B cell (primary cell): ENCODE measurements at regions of chr18 and their contacts with region 1.

Region 1: GRCh38 chr18:58716060-58716756 is 44.9 kb downstream of the MALT1 start:
- DNase-seq: peak; percentile 57
- ATAC-seq: peak; percentile 73
- H3K4me3 ChIP-seq: peak overlapping the region in 1 of 5 experiments; percentile 5
- H3K4me3 Mint-ChIP-seq: peak overlapping the region; percentile 62
- H3K27ac ChIP-seq: peak overlapping the region in 1 of 2 donors; percentile 82
- H3K27ac Mint-ChIP-seq: peak overlapping the region; percentile 70
- H3K4me1 ChIP-seq: peaks cover 23 to 34% of the 10 kb centered on the region in 2 donors
- H3K4me1 Mint-ChIP-seq: peaks cover 40% of the 10 kb centered on the region
- H3K27me3 ChIP-seq: no peaks in the 10 kb centered on the region
- H3K27me3 Mint-ChIP-seq: no peaks in the 10 kb centered on the region
- CTCF ChIP-seq: no peak

Region 2: DNA sequence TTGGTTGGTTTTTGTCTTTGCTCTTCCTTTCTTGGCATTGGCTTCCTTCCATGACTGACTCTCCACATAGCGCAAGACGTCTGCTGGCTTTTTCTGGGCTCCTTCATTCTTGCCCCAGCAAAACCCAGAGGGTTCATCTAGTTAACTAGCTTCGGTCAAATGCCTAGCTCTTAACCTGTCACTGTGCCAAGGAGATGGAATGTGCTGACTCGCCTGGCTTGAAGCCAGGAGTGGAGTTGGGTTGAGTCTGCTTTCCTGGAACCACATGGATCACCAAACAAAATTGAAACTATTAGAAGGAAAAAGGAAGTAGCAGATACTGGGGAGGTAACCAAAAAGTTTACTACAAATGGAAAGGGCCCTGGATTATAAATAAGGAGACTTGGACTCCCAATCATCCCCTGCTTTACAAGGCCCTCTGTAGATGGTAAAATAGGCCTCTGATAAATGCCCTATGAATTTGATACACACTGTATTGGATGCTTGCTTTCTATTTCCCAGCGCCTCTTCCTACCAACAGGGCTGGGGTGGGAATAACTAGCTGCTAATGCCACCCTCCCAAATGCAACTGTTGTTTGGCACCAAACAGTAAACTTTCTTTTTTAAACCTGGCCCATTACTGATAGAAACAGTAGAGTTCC is 33.7 kb before region 1 on chr18:
- CTCF ChIA-PET with region 1: no interaction called
- POLR2A ChIA-PET with region 1: no interaction called
- intact Hi-C with region 1: loop called (anchors 2 kb)
- DNase-seq: no peak
- ATAC-seq: no peak
- H3K4me3 ChIP-seq: no peak overlapping the region
- H3K4me3 Mint-ChIP-seq: no peak overlapping the region
- H3K27ac ChIP-seq: peak overlapping the region in 1 of 2 donors; percentile 37
- H3K27ac Mint-ChIP-seq: no peak overlapping the region
- H3K4me1 ChIP-seq: peaks cover 4 to 13% of the 10 kb centered on the region in 2 donors
- H3K4me1 Mint-ChIP-seq: peaks cover 41% of the 10 kb centered on the region
- H3K27me3 ChIP-seq: no peaks in the 10 kb centered on the region
- H3K27me3 Mint-ChIP-seq: no peaks in the 10 kb centered on the region
- CTCF ChIP-seq: no peak

Region 3: DNA sequence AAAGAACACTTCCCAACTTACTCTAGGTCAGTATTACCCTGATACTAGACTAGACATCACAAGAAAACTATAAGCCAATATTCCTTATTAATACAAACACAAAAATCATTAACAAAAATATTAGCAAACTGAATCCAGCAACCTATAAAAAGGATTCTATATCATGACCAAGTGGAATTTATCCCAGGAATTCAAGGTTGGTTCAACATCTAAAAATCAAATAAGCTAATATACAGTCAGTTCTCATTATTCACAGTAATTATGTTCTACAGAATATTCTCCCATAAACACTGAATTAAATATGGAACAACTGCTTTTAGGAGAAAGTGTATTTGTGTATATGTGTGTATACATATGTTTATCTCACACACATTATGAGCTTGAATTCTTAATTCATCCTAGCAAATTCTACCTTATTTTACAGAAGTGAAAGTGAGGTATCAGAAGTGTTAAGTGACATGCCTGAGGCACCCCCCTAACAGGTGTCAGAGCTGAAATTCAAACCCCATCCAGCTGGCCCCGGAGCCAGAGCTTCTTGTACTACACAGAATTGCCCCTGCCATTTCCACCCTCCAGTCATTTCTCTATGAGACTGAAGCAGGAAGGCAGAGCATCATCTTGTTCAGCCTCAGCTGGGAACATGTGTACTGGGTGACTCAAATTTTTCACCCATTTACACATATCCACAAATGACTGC is 32.8 kb after region 1 on chr18:
- CTCF ChIA-PET with region 1: no interaction called
- POLR2A ChIA-PET with region 1: no interaction called
- intact Hi-C with region 1: loop called (anchors 5 kb)
- DNase-seq: no peak
- ATAC-seq: no peak
- H3K4me3 ChIP-seq: no peak overlapping the region
- H3K4me3 Mint-ChIP-seq: no peak overlapping the region
- H3K27ac ChIP-seq: no peak overlapping the region
- H3K27ac Mint-ChIP-seq: no peak overlapping the region
- H3K4me1 ChIP-seq: no peaks in the 10 kb centered on the region
- H3K4me1 Mint-ChIP-seq: peaks cover 14% of the 10 kb centered on the region
- H3K27me3 ChIP-seq: no peaks in the 10 kb centered on the region
- H3K27me3 Mint-ChIP-seq: no peaks in the 10 kb centered on the region
- CTCF ChIP-seq: no peak

Region 4: GRCh38 chr18:58787536-58788149 is 71.4 kb after region 1 on chr18:
- CTCF ChIA-PET with region 1: no interaction called
- POLR2A ChIA-PET with region 1: no interaction called
- intact Hi-C with region 1: no loop called
- DNase-seq: no peak
- ATAC-seq: no peak
- H3K4me3 ChIP-seq: no peak overlapping the region
- H3K4me3 Mint-ChIP-seq: no peak overlapping the region
- H3K27ac ChIP-seq: no peak overlapping the region
- H3K27ac Mint-ChIP-seq: no peak overlapping the region
- H3K4me1 ChIP-seq: peaks cover 2 to 13% of the 10 kb centered on the region in 2 donors
- H3K4me1 Mint-ChIP-seq: peaks cover 8% of the 10 kb centered on the region
- H3K27me3 ChIP-seq: no peaks in the 10 kb centered on the region
- H3K27me3 Mint-ChIP-seq: no peaks in the 10 kb centered on the region
- CTCF ChIP-seq: no peak

Region 5: GRCh38 chr18:58847383-58848071 is 131.3 kb after region 1 on chr18:
- CTCF ChIA-PET with region 1: no interaction called
- POLR2A ChIA-PET with region 1: no interaction called
- intact Hi-C with region 1: no loop called
- DNase-seq: peak; percentile 47
- ATAC-seq: peak; percentile 45
- H3K4me3 ChIP-seq: peak overlapping the region in 4 of 5 experiments; percentile 28 to 59 (median 53)
- H3K4me3 Mint-ChIP-seq: peak overlapping the region; percentile 87
- H3K27ac ChIP-seq: no peak overlapping the region
- H3K27ac Mint-ChIP-seq: peak overlapping the region; percentile 37
- H3K4me1 ChIP-seq: peaks cover 13 to 18% of the 10 kb centered on the region in 2 donors
- H3K4me1 Mint-ChIP-seq: peaks cover 21% of the 10 kb centered on the region
- H3K27me3 ChIP-seq: peaks cover 0 to 19% (median 2%) of the 10 kb centered on the region in 4 experiments
- H3K27me3 Mint-ChIP-seq: peaks cover 13% of the 10 kb centered on the region
- CTCF ChIP-seq: no peak